Tibial artery (tissue), 4 donors: ENCODE measurements at regions of chr12 and their contacts with region 1.

Region 1: DNA sequence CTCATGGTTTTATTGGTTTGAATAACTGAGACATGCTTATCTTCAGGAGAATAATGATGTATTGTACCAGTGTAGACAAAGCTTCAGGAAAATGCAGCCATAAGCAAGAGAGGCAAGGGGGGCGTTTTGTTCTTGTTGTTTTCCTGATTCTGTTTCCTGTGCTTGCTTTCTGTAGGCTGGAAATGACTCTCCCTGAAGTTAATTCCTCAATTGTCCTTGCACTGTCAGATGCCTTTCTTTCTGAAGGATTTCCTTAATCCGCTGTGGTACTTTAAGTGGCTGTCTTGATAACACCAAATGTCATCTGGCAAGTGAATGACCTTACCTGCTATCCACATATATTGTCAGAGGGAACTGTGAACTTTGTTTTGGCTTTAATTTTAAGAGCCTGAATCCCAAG is 220.0 kb downstream of the NEDD1 start:
- DNase-seq: no peak
- H3K4me3 ChIP-seq: no peak overlapping the region
- H3K27ac ChIP-seq: no peak overlapping the region
- H3K4me1 ChIP-seq: no peaks in the 10 kb centered on the region
- H3K27me3 ChIP-seq: no peaks in the 10 kb centered on the region
- CTCF ChIP-seq: no peak

Region 2: DNA sequence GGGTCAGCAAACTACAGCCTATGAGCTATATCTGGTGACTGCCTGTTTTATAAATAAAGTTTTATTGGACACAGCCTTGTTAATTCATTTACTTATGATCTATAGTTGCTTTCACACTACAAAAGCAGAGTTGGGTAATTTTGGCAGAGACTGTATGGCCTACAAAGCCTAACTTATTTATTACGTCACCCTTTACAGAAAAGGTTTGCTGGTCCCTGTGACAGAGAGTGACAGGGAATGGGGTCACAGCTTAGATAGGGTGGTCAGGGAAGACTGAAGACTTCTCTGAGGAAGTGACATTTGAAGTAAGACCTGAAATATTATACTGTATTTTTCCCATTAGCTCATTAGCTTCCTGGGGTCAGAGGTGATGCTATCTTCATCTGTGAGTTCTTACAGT is 295.7 kb before region 1 on chr12:
- intact Hi-C with region 1: loop called (anchors 10 kb)
- DNase-seq: no peak
- H3K4me3 ChIP-seq: no peak overlapping the region
- H3K27ac ChIP-seq: no peak overlapping the region
- H3K4me1 ChIP-seq: no peaks in the 10 kb centered on the region
- H3K27me3 ChIP-seq: no peaks in the 10 kb centered on the region
- CTCF ChIP-seq: no peak

Region 3: GRCh38 chr12:97063292-97063935 is 63.6 kb before region 1 on chr12:
- intact Hi-C with region 1: no loop called
- DNase-seq: no peak
- H3K4me3 ChIP-seq: no peak overlapping the region
- H3K27ac ChIP-seq: no peak overlapping the region
- H3K4me1 ChIP-seq: no peaks in the 10 kb centered on the region
- H3K27me3 ChIP-seq: no peaks in the 10 kb centered on the region
- CTCF ChIP-seq: no peak

Region 4: GRCh38 chr12:97223419-97223818 is 96.4 kb after region 1 on chr12:
- intact Hi-C with region 1: no loop called
- DNase-seq: no peak
- H3K4me3 ChIP-seq: no peak overlapping the region
- H3K27ac ChIP-seq: no peak overlapping the region
- H3K4me1 ChIP-seq: no peaks in the 10 kb centered on the region
- H3K27me3 ChIP-seq: no peaks in the 10 kb centered on the region
- CTCF ChIP-seq: no peak